ENCODE measurements at regions of chr20 and their contacts with region 1.

Region 1: DNA sequence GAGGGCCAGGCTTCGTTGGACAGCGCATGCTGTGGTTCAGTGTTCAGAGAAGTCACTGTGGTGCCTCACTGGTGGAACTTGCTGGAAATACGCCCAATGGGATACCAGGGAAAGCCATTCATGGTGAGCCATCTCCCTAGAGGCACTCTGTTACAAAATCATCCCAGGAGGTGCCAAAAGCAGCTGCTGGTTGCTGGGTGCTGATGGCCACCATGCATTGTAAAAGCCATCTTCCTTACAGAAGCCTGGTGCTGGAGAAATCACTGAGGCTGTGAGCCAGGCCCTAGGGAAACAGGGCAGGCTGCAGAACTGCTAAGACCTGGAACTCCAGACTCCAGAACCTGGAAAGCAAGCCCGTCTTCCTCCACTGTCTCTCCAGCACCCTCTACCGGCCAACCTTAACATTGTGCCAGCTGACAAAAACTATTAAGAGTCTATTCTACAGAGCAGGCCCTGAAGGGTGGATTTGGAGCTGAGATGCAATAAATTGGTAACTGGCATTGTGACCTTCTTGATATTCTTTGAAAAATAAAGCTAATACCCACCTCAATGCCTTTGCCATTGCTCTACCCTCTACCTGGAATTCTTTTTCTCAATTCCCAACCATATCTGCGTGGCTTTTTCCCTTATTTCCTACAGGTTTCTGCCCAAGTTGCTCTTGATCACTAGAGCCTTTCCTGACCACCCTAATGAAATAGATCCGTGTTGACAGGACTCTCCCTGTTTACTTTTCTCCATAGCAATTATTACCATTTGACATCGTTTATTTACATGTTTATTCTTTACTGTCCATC is 18.5 kb downstream of the SNRPB start:
- DNase-seq: peak; percentile 85
- ATAC-seq: peak; percentile 58
- H3K4me3 Mint-ChIP-seq: no peak overlapping the region
- H3K27ac Mint-ChIP-seq: no peak overlapping the region
- H3K4me1 Mint-ChIP-seq: peaks cover 45% of the 10 kb centered on the region
- H3K27me3 Mint-ChIP-seq: no peaks in the 10 kb centered on the region

Region 2: GRCh38 chr20:2005831-2006426 is 446.2 kb before region 1 on chr20:
- CTCF ChIA-PET with region 1: no interaction called
- POLR2A ChIA-PET with region 1: no interaction called
- intact Hi-C with region 1: loop called in 1 of 2 experiments (anchors 5 kb)
- DNase-seq: peak; percentile 83
- ATAC-seq: no peak
- H3K4me3 Mint-ChIP-seq: no peak overlapping the region
- H3K27ac Mint-ChIP-seq: no peak overlapping the region
- H3K4me1 Mint-ChIP-seq: no peaks in the 10 kb centered on the region
- H3K27me3 Mint-ChIP-seq: peaks cover 20% of the 10 kb centered on the region

Region 3: GRCh38 chr20:2349818-2350508 is 102.2 kb before region 1 on chr20:
- CTCF ChIA-PET with region 1: interaction called, 11 read pairs
- POLR2A ChIA-PET with region 1: no interaction called
- intact Hi-C with region 1: no loop called
- DNase-seq: no peak
- ATAC-seq: no peak
- H3K4me3 Mint-ChIP-seq: no peak overlapping the region
- H3K27ac Mint-ChIP-seq: no peak overlapping the region
- H3K4me1 Mint-ChIP-seq: peaks cover 6% of the 10 kb centered on the region
- H3K27me3 Mint-ChIP-seq: peaks cover 17% of the 10 kb centered on the region

Region 4: DNA sequence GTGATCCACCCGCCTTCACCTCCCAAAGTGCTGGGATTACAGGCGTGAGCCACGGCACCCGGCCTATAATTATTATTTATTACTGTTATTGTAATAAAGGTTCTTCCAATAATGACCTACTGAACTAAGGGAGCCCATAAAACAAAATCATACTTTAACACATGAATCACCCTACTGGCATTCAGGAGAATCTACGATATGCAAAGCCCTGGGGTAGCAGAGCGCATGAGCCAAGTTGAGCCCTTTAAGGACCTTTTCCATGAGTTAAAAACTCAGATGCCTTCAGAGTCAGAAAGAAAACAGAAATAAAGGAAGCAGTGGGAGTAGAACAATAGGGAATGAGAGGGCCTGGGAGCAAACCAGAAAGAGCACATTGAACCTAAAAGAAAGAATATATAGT is 23.1 kb before region 1 on chr20:
- CTCF ChIA-PET with region 1: interaction called, 20 read pairs
- POLR2A ChIA-PET with region 1: no interaction called
- intact Hi-C with region 1: no loop called
- DNase-seq: no peak
- ATAC-seq: no peak
- H3K4me3 Mint-ChIP-seq: no peak overlapping the region
- H3K27ac Mint-ChIP-seq: no peak overlapping the region
- H3K4me1 Mint-ChIP-seq: no peaks in the 10 kb centered on the region
- H3K27me3 Mint-ChIP-seq: peaks cover 9% of the 10 kb centered on the region